Sigmoid colon (tissue), 7 donors: ENCODE measurements at regions of chr1 and their contacts with region 1.

Region 1: GRCh38 chr1:174217787-174218574 is 58.7 kb downstream of the RABGAP1L start:
- DNase-seq: no peak
- H3K4me3 ChIP-seq: no peak overlapping the region
- H3K27ac ChIP-seq: peak overlapping the region in 1 of 4 donors; percentile 53
- H3K4me1 ChIP-seq: no peaks in the 10 kb centered on the region
- H3K27me3 ChIP-seq: no peaks in the 10 kb centered on the region
- CTCF ChIP-seq: peak; percentile 16 to 72 (median 60)
- EP300 ChIP-seq: no peak
- POLR2A ChIP-seq: no peak

Region 2: GRCh38 chr1:173986951-173987350 is 231.0 kb before region 1 on chr1:
- intact Hi-C with region 1: loop called (anchors 5 kb)
- DNase-seq: no peak
- H3K4me3 ChIP-seq: no peak overlapping the region
- H3K27ac ChIP-seq: no peak overlapping the region
- H3K4me1 ChIP-seq: no peaks in the 10 kb centered on the region
- H3K27me3 ChIP-seq: no peaks in the 10 kb centered on the region
- CTCF ChIP-seq: no peak
- EP300 ChIP-seq: no peak
- POLR2A ChIP-seq: no peak

Region 3: GRCh38 chr1:174159252-174160108 is 58.5 kb before region 1 on chr1 and contains the start of gene RABGAP1L:
- intact Hi-C with region 1: loop called (anchors 5 kb)
- DNase-seq: peak; percentile 96
- H3K4me3 ChIP-seq: peak within 1 kb of the TSS; percentile 80 to 90 (median 84)
- H3K27ac ChIP-seq: peak within 1 kb of the TSS; percentile 86 to 94 (median 90)
- H3K4me1 ChIP-seq: peaks cover 0 to 15% (median 10%) of the 10 kb centered on the region in 4 donors
- H3K27me3 ChIP-seq: no peaks in the 10 kb centered on the region
- CTCF ChIP-seq: no peak
- EP300 ChIP-seq: no peak
- POLR2A ChIP-seq: peak; percentile 74 to 77
- total RNA-seq, gene RABGAP1L: 30.4 to 42.9 (median 36.4) TPM